Common myeloid progenitor, CD34-positive (primary cell): ENCODE measurements at regions of chr22 and their contacts with region 1.

Region 1: DNA sequence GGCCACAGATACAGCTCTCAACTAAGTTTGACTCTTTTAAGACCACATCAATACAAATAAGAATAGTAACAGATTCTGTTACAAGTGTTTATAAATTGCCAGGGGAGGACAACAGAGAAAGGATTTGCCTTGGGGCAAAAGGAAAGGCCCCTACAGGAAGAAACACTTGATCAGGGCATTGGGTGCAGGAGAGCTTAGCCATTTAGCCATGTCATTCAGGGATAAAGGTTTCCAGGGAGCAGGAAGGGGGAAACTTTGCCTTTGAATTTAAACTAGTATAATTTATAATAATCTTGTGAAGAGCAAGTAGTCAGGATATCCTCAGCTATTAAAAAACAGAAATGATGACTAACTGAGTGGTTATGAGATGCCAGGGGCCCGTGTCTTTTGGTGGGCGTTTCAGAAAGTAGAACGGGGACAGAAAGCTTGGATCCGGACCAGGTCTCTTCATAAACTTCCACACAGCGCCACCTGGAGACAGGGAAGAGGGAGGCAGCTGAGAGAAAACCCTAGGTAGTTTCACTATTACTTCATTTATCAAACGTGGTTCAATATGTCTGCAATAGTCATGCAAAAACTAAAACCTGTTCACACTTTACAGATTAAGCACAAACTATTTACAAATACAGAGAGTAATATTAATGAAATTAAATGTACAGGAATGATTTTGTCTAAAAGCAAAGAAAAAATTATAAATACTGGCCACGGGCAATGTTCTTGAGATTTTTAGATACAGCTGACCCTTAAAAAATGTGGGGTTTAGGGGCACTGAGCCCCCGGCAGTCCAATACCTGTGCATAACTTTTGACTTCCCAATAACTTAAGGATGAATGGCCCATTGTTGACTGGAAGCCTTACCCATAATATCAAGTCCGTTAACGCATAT is 11.0 kb upstream of the SLC5A4 start:
- DNase-seq: peak; percentile 79 to 89 (median 84)
- H3K4me3 ChIP-seq: peak overlapping the region in 1 of 7 experiments; percentile 2
- H3K27ac ChIP-seq: no peak overlapping the region
- H3K4me1 ChIP-seq: peaks cover 0 to 2% (median 0%) of the 10 kb centered on the region in 4 experiments
- H3K27me3 ChIP-seq: no peaks in the 10 kb centered on the region

Region 2: GRCh38 chr22:32103658-32104315 is 162.3 kb before region 1 on chr22:
- CTCF ChIA-PET with region 1: interaction called, 22 read pairs
- POLR2A ChIA-PET with region 1: no interaction called
- DNase-seq: peak; percentile 9 to 49 (median 30)
- H3K4me3 ChIP-seq: no peak overlapping the region
- H3K27ac ChIP-seq: no peak overlapping the region
- H3K4me1 ChIP-seq: no peaks in the 10 kb centered on the region
- H3K27me3 ChIP-seq: peaks cover 0 to 13% (median 6%) of the 10 kb centered on the region in 5 experiments